Prostate gland (tissue), 2 donors: ENCODE measurements at regions of chrX and their contacts with region 1.

Region 1: GRCh38 chrX:48597353-48598264 is at the start of gene WDR13:
- DNase-seq: peak; percentile 86
- H3K4me3 ChIP-seq: peak within 1 kb of the TSS; percentile 46 to 59
- H3K27ac ChIP-seq: peak within 1 kb of the TSS; percentile 94 to 97
- H3K4me1 ChIP-seq: no peaks in the 10 kb centered on the region
- H3K27me3 ChIP-seq: no peaks in the 10 kb centered on the region
- CTCF ChIP-seq: no peak
- POLR2A ChIP-seq: peak; percentile 58
- total RNA-seq, gene WDR13: 102 to 190 TPM

Region 2: GRCh38 chrX:48498374-48498809 is 99.2 kb before region 1 on chrX:
- intact Hi-C with region 1: no loop called
- DNase-seq: no peak
- H3K4me3 ChIP-seq: no peak overlapping the region
- H3K27ac ChIP-seq: no peak overlapping the region
- H3K4me1 ChIP-seq: no peaks in the 10 kb centered on the region
- H3K27me3 ChIP-seq: no peaks in the 10 kb centered on the region
- CTCF ChIP-seq: no peak
- POLR2A ChIP-seq: no peak

Region 3: DNA sequence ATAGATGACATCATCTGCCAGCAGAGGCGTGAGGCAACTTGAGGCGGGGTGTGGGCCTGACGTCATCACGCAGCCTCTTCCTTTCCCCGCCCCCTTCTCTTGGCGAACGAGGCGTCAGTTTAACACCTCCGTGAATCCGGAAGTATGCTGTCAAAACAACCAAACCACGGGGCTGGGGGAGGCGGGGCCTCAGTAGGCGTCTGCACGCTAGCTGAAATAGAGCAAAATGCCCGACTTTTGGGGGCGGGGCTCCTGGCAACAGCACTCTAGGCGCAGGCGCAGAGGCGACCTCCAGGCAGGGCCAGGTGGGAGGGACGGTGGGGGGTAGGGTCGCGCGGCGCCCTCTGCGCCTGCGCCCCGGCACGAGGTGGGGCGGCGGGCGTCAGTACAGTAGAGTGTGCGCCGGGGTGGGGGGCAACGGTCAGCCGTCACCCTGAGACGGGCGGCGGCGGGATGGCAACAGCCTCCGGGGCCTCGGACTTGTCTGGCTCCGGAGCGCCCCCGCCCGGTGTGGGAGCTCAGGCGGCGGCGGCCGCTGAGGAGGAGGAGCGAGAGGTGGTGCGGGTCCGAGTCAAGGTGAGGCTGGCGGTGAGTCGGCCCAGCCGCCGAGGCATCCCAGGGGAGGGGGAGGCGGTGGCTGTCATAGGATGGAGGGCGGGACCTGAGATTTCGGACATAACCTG is 58.1 kb before region 1 on chrX and contains the start of gene TBC1D25:
- intact Hi-C with region 1: loop called (anchors 10 kb)
- DNase-seq: peak; percentile 92
- H3K4me3 ChIP-seq: peak within 1 kb of the TSS; percentile 51 to 59
- H3K27ac ChIP-seq: peak within 1 kb of the TSS; percentile 85
- H3K4me1 ChIP-seq: no peaks in the 10 kb centered on the region
- H3K27me3 ChIP-seq: no peaks in the 10 kb centered on the region
- CTCF ChIP-seq: peak in 3 of 4 experiments; percentile 10 to 39 (median 29)
- POLR2A ChIP-seq: peak; percentile 62
- total RNA-seq, gene TBC1D25: 8.9 to 21.9 TPM